PC-9 (cell line): ENCODE measurements at regions of chr19 and their contacts with region 1.

Region 1: DNA sequence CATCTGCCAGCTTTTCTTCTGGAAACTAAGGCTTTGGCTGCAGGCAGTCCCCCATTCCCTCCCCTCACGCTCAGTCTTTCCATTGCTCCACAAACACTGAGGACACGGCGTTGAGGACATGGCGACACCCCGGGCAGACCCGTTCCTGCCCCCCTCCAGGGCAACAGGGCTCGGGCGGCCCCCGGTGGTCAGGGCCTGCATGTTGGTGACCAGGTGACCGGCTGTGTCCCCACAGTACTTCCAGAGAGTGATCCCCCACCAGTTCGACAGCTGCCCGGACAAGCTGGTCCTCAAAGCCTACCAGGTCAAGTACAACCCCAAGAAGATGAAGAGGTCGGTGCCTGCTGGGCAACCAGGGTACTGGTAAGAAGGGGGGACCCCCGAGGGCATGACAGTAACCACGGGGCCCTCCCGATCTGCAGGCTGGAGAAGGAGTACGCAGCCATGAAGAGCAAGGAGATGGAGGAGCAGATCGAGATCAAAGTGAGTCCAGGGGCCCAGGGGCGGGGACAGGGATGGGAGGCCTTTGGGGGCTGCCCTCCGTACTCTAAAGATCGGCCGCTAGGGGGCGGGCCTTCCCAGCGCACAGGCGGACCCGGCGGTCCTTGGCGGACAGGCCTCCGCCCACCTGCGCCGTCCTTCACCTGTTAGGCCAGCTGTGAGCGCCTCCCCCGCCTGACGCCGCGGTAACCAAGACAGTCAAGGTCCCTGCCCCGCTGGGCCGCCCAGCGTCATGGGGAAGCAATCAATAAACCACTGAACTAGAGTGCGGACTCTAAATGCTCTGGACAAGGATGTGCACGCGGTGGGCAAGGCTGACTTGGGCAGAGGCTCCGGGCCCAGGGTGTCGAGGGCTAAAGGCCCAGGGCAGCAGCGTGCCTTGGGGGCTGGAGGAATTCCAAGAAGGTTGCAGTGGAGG is 21.1 kb downstream of the PRR36 start:
- DNase-seq: peak; percentile 80 to 87
- H3K4me3 ChIP-seq: peak overlapping the region; percentile 24; the same call in 1 of the 2 replicates
- H3K27ac ChIP-seq: no peak overlapping the region
- H3K4me1 ChIP-seq: peaks cover 14% of the 10 kb centered on the region
- H3K27me3 ChIP-seq: no peaks in the 10 kb centered on the region
- CTCF ChIP-seq: peak; percentile 99

Region 2: DNA sequence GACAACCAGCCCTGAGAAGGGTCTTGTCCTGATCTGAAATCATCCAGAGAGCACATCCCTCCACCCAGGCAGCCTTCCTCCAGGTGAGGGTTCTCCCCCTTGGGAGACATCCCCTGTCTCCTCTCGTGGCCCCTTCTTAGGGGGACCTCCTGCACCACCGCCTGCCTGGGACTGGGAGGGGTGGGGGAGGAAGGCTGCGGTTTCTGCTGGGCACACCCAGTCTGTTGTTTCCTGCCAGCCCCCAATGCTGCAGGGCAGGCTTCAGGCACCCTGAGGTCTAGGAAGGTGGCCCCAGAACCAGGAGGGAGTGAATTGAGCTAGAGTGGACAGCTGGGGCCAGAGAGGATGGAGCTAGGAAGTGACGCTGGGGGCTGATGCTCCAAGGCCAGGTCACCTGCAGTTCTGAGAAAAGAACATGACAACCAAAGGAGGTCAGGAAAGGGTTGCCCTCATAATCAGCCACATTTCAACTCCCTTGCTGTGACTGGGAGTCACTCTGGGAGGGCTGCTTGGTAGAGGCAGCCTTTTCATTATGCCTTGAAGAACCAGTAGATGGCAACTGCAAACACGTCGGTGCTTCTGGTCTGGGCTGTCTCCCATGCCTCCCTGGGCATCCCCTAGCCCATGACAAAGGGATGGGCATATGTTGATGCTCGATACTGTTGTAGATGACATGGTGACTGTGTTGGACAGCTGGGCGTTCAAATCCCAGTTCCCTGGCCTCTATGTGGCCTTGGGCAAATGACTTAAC is 503.0 kb before region 1 on chr19:
- CTCF ChIA-PET with region 1: no interaction called
- POLR2A ChIA-PET with region 1: no interaction called
- intact Hi-C with region 1: loop called (anchors 5 kb)
- DNase-seq: no peak
- H3K4me3 ChIP-seq: no peak overlapping the region
- H3K27ac ChIP-seq: no peak overlapping the region
- H3K4me1 ChIP-seq: no peaks in the 10 kb centered on the region; the same call in 1 of the 2 replicates
- H3K27me3 ChIP-seq: no peaks in the 10 kb centered on the region
- CTCF ChIP-seq: no peak

Region 3: DNA sequence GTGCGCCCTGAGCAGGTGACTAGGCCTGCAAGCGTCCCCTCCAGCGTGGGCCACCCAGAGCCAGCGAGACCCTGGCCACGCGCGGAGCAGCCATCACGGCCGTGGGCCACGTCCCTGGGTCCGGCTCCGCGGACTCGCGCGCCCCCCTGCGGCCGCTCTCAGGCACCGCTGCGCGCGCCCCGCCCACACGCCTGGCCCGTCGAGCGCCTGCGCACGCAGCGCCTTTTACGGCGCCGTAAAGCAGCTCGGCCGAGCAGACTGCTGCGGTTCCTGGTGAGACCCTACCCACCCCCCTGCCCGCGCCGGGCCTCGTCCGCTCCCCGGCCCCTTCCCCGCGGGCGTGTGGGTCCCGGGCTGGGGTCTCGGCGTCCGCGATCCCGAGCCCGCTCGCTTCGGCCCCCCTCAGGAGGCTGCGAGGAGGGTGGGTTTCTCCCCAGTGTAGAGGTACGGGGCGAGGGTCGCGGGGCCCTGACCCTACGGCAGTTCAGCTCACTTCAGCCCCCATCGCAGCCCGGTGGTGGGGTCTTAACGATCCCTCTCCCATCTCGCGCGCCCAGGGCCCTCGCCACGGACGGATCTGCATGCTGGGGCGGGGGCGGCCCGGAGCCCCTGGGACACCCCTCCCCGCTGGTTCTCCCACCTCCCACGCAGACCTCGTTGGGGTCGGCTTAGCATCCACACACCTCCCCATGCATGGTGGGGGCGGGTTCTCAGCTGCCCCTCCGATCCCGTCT is 172.3 kb before region 1 on chr19 and contains the start of gene TRAPPC5:
- CTCF ChIA-PET with region 1: interaction called, 4 read pairs
- POLR2A ChIA-PET with region 1: no interaction called
- intact Hi-C with region 1: loop called (anchors 2 kb)
- DNase-seq: peak; percentile 65 to 82
- H3K4me3 ChIP-seq: peak within 1 kb of the TSS; percentile 91
- H3K27ac ChIP-seq: peak within 1 kb of the TSS; percentile 32; the same call in 1 of the 2 replicates
- H3K4me1 ChIP-seq: peaks cover 21% of the 10 kb centered on the region
- H3K27me3 ChIP-seq: peaks cover 24% of the 10 kb centered on the region
- CTCF ChIP-seq: peak; percentile 89
- total RNA-seq, gene TRAPPC5: 81.2 and 103 TPM in 2 replicates

Region 4: GRCh38 chr19:7819337-7819736 is 33.8 kb before region 1 on chr19:
- CTCF ChIA-PET with region 1: no interaction called
- POLR2A ChIA-PET with region 1: no interaction called
- intact Hi-C with region 1: no loop called
- DNase-seq: no peak
- H3K4me3 ChIP-seq: no peak overlapping the region
- H3K27ac ChIP-seq: no peak overlapping the region
- H3K4me1 ChIP-seq: peaks cover 7% of the 10 kb centered on the region; the same call in 1 of the 2 replicates
- H3K27me3 ChIP-seq: no peaks in the 10 kb centered on the region
- CTCF ChIP-seq: no peak

Region 5: DNA sequence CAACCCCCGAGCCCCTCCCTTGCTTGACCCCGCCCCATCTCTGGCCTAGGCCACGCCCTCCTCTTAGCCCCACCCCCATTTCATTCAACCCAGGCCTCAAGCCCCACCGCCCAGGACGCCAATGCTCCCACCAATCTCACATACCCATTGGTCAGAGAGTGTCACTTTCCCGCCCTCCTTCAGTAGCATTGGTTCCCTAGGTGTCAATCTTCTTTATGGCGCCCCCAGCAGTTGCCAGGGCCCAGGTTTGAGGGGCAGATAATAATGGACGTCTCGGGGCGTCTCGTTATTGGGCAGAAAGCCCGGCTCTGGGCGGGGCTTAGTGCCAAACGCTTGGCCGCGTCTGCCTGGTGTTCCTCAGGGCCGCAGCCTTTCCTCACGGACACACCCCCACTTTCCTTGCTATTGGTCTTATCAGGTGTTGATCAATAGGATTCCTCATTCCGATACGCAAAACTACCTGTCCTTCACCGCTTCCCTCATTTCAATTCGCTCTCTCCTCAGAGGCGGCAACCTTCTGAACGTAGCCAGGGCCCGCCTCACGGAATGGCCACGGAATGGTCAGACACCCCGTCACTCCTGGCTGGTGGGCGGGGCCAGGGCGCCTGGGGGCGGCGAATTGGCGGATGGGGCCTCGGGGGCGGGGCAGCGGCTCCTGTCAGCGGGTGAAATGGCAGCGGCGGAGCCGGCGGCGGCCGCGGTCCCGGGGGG is 23.4 kb before region 1 on chr19 and contains the start of gene EVI5L:
- CTCF ChIA-PET with region 1: interaction called, 3 read pairs
- POLR2A ChIA-PET with region 1: no interaction called
- intact Hi-C with region 1: loop called (anchors 1 kb)
- DNase-seq: peak; percentile 98 to 100
- H3K4me3 ChIP-seq: peak within 1 kb of the TSS; percentile 56; the same call in 1 of the 2 replicates
- H3K27ac ChIP-seq: no peak within 1 kb of the TSS
- H3K4me1 ChIP-seq: peaks cover 22% of the 10 kb centered on the region
- H3K27me3 ChIP-seq: peaks cover 13% of the 10 kb centered on the region; the same call in 1 of the 2 replicates
- CTCF ChIP-seq: no peak; the same call in 1 of the 2 replicates
- total RNA-seq, gene EVI5L: 13.1 and 19.2 TPM in 2 replicates

Region 6: GRCh38 chr19:7919610-7920518 is 66.8 kb after region 1 on chr19 and contains the start of gene SNAPC2:
- CTCF ChIA-PET with region 1: interaction called, 5 read pairs
- POLR2A ChIA-PET with region 1: no interaction called
- intact Hi-C with region 1: loop called (anchors 1 kb)
- DNase-seq: peak; percentile 85 to 97
- H3K4me3 ChIP-seq: peak within 1 kb of the TSS; percentile 77
- H3K27ac ChIP-seq: peak within 1 kb of the TSS; percentile 46
- H3K4me1 ChIP-seq: peaks cover 23% of the 10 kb centered on the region
- H3K27me3 ChIP-seq: peaks cover 19% of the 10 kb centered on the region
- CTCF ChIP-seq: no peak
- total RNA-seq, gene SNAPC2: 37.5 and 42.1 TPM in 2 replicates

Region 7: DNA sequence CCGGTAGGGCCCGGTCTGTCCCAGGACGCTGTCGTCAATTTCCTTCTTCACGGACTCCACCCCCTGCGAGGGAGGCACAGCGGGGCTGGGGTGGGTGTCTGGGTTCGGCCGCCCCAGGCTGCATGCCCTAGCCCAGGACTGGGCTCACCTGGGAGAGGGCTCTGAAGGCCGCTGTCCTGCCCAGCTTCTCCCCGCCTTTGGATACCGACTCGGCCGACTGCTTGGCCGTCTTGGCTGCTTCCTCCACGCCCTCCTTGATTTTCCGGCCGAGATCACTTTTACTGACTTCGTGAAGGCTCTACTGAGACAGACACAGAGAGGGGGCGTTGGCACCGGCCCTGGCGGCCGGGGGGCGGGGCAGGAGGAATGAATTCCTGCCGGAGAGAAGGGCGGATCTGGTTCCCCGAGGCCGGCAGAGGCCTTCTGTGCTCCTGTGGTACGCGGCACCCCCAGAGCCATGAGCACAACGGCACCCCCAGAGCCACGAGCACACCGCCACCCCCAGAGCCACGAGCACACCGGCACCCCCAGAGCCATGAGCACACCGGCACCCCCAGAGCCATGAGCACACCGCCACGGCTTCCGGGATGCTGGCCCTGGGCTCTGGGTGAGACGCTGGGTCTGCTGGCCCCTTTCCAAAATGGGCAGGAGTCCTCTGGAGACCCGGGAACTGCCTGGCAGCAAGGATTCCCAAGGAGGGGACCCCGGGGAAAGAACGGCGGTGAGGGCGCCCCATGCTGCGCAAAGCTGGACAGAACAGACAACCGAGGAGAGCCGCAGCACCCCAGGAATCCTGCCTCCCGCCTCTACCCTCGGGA is 81.0 kb after region 1 on chr19:
- CTCF ChIA-PET with region 1: no interaction called
- POLR2A ChIA-PET with region 1: no interaction called
- intact Hi-C with region 1: no loop called
- DNase-seq: no peak
- H3K4me3 ChIP-seq: no peak overlapping the region
- H3K27ac ChIP-seq: no peak overlapping the region
- H3K4me1 ChIP-seq: peaks cover 14% of the 10 kb centered on the region
- H3K27me3 ChIP-seq: no peaks in the 10 kb centered on the region
- CTCF ChIP-seq: no peak